ENCODE measurements at regions of chr9 and their contacts with region 1.

Region 1: GRCh38 chr9:131862261-131862660 is 122.4 kb upstream of the RAPGEF1 start:
- DNase-seq: no peak
- H3K4me3 ChIP-seq: no peak overlapping the region
- H3K4me3 Mint-ChIP-seq: no peak overlapping the region
- H3K27ac Mint-ChIP-seq: no peak overlapping the region
- H3K4me1 ChIP-seq: no peaks in the 10 kb centered on the region
- H3K4me1 Mint-ChIP-seq: no peaks in the 10 kb centered on the region
- H3K27me3 ChIP-seq: no peaks in the 10 kb centered on the region
- H3K27me3 Mint-ChIP-seq: no peaks in the 10 kb centered on the region
- CTCF ChIP-seq: no peak

Region 2: DNA sequence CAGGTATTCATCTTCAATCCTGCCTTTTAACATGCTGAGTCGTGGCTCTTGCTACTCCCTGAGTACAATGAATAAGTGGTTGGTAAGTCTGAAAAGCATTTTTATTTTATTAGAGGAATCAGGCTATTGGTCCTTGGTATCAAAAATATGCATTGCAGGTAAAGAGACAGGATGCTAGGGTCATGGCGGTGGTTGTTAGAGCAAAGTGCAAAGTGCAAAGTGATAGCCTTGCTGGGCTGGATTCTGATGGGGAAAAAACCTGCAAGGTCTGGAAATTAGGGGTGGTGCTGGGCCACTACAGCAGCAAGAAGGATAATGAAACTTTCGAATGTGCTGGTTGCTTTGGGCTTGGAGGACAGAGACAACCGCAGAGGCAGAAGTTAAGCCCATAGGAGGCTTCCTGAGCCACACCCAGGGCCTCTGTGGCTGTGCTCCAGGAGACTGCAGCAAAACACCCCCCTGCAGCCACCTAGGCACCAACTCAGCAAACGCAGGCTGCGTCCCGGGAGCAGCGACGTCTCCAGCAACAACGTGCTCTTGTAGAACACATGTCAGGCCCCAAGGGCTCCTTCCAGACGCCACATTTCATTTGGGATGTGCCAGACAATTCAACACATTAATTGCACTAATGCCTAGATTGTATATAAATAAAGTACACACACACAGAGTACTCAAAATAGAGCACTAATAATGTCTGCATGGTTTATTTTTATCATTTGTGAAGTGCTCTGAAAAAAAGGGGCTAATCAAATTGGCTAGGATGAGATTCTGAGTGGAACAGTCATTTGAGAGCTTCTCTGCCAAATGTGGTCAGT is 27.4 kb after region 1 on chr9:
- CTCF ChIA-PET with region 1: no interaction called
- POLR2A ChIA-PET with region 1: no interaction called
- intact Hi-C with region 1: no loop called
- DNase-seq: no peak
- H3K4me3 ChIP-seq: no peak overlapping the region
- H3K4me3 Mint-ChIP-seq: no peak overlapping the region
- H3K27ac Mint-ChIP-seq: no peak overlapping the region
- H3K4me1 ChIP-seq: no peaks in the 10 kb centered on the region
- H3K4me1 Mint-ChIP-seq: no peaks in the 10 kb centered on the region
- H3K27me3 ChIP-seq: no peaks in the 10 kb centered on the region
- H3K27me3 Mint-ChIP-seq: no peaks in the 10 kb centered on the region
- CTCF ChIP-seq: no peak

Region 3: GRCh38 chr9:132079391-132080091 is 217.3 kb after region 1 on chr9 and contains the start of gene MED27:
- CTCF ChIA-PET with region 1: no interaction called
- POLR2A ChIA-PET with region 1: no interaction called
- intact Hi-C with region 1: loop called (anchors 5 kb)
- DNase-seq: peak; percentile 84 to 89
- H3K4me3 ChIP-seq: peak within 1 kb of the TSS; percentile 66
- H3K4me3 Mint-ChIP-seq: peak within 1 kb of the TSS; percentile 97
- H3K27ac Mint-ChIP-seq: peak within 1 kb of the TSS; percentile 81
- H3K4me1 ChIP-seq: peaks cover 12% of the 10 kb centered on the region; the same call in 1 of the 2 replicates
- H3K4me1 Mint-ChIP-seq: peaks cover 14% of the 10 kb centered on the region
- H3K27me3 ChIP-seq: no peaks in the 10 kb centered on the region
- H3K27me3 Mint-ChIP-seq: peaks cover 2% of the 10 kb centered on the region
- CTCF ChIP-seq: no peak
- total RNA-seq, gene MED27: 24.7 and 30.4 TPM in 2 replicates